ENCODE measurements at regions of chr7 and their contacts with region 1.

Region 1: DNA sequence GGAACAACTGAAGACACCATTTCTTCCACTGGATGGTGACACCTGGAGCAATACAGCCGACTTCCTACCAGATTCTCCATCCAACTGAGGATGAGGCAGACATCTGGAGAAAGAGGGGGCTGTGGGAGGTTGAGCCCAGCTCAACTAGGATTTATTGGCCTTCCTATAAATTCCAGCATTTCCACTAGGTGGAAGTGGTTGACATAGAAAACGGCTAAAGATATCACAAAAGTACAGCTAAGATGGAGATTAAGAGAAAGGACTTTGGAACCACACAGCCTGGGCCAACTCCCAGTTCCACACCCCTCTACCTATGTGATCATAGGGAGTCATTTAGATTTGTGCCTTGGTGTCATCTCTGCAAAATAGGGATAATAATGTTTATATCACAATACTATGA is 61.3 kb upstream of the CAV2 start:
- DNase-seq: peak; percentile 42 to 47
- H3K4me3 ChIP-seq: no peak overlapping the region
- H3K4me3 Mint-ChIP-seq: no peak overlapping the region
- H3K27ac Mint-ChIP-seq: no peak overlapping the region
- H3K4me1 ChIP-seq: peaks cover 24% of the 10 kb centered on the region
- H3K4me1 Mint-ChIP-seq: peaks cover 4% of the 10 kb centered on the region
- H3K27me3 ChIP-seq: no peaks in the 10 kb centered on the region
- H3K27me3 Mint-ChIP-seq: no peaks in the 10 kb centered on the region
- CTCF ChIP-seq: peak; percentile 19 to 41

Region 2: DNA sequence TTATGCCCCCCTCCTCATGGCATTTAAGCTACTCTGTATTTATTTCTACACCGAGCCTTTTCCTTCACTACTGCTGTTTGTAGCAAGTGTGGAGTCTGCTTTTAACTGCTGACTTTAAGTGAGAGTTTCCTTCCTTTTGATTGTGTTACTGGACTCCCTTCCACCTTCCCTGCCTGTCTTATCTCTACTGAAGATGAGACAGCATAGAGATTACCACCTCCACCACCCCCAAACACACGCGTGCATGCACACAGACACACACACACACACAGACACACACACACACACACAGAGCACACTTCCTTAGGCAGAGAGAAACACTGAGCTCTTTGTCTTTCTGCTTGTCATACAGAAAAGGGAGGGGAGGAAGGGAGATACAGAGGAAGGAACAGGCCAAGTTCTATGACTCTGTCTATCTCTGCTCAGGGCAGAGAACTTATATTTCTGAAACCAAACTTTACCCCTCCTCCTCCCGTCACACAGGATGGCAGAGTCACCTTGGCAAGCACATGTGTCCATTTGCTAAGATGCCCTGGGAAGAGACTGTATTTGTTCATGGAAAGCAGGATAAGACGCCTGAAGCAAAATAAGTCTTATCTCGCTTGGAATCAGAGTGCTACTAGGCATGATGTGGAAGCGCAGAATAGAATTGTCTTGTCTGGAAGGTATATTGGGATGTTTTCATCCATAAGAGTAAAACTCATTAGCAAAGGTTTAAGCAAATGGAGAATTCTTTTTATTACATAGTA is 20.5 kb before region 1 on chr7:
- CTCF ChIA-PET with region 1: no interaction called
- POLR2A ChIA-PET with region 1: no interaction called
- intact Hi-C with region 1: no loop called
- DNase-seq: no peak
- H3K4me3 ChIP-seq: no peak overlapping the region
- H3K4me3 Mint-ChIP-seq: no peak overlapping the region
- H3K27ac Mint-ChIP-seq: no peak overlapping the region
- H3K4me1 ChIP-seq: no peaks in the 10 kb centered on the region; the same call in 1 of the 2 replicates
- H3K4me1 Mint-ChIP-seq: peaks cover 8% of the 10 kb centered on the region
- H3K27me3 ChIP-seq: no peaks in the 10 kb centered on the region
- H3K27me3 Mint-ChIP-seq: no peaks in the 10 kb centered on the region
- CTCF ChIP-seq: no peak

Region 3: DNA sequence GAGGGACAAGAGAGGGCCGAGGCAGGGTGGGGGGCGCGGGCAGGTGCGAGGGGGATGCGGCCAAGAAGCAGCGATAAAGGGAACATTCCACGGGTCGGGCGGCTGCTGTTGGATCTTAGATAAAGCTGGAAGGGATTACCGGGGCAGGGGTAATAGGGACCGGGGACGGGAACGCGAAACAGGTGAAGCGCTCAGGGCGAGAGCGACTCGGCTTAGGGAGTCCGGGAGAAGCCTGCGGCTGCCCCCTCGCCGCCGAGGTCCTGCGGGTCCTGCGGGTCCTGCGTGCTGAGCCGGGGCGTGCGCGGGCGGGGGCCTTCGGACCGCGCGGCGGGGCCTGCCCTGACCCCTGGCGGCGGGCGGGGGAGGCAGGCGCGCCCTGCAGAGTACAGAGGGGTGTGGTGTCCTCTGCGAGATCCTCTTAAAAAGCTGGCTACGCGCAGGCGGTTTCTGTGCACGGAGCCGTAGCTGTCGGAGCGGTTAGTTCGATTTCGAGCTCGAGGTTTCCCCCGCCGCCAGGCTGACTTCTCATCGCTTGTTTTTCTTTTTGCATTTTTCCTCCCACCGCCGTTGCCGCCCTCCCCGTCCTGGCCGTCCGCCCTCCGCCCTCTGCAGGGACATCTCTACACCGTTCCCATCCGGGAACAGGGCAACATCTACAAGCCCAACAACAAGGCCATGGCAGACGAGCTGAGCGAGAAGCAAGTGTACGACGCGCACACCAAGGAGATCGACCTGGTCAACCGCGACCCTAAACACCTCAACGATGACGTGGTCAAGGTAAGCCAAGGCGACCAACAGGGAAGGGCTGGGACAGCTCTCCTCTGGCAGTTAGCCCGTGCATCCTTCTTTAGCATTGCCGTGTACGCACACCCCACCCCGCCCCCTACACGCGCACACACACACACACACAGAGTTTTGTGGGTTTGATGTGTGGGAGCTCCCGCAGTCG is 87.9 kb after region 1 on chr7:
- CTCF ChIA-PET with region 1: interaction called, 26 read pairs
- POLR2A ChIA-PET with region 1: no interaction called
- intact Hi-C with region 1: loop called (anchors 1 kb)
- DNase-seq: peak; percentile 75 to 88
- H3K4me3 ChIP-seq: peak overlapping the region; percentile 60
- H3K4me3 Mint-ChIP-seq: peak overlapping the region; percentile 94
- H3K27ac Mint-ChIP-seq: peak overlapping the region; percentile 52
- H3K4me1 ChIP-seq: peaks cover 10% of the 10 kb centered on the region; the same call in 1 of the 2 replicates
- H3K4me1 Mint-ChIP-seq: no peaks in the 10 kb centered on the region
- H3K27me3 ChIP-seq: no peaks in the 10 kb centered on the region
- H3K27me3 Mint-ChIP-seq: no peaks in the 10 kb centered on the region
- CTCF ChIP-seq: peak; percentile 66 to 91

Region 4: DNA sequence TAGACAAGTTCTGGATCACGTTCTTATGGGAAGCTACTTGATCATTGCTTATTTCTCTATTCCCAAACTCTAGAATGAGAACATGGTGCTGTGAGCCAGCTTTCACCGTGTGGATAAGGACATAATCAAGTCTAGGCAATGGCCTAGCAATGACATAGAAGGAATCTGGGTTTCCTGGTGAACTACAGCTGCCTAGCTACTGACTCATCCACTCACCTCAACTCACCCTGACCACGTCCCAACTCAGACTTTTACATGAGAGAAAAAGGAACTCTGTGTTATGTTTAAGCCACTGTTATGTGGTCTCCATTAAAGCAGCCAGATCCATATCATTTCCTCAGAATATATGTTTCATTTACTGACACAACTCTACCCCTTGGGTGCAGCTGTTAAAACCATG is 214.9 kb after region 1 on chr7:
- CTCF ChIA-PET with region 1: no interaction called
- POLR2A ChIA-PET with region 1: no interaction called
- intact Hi-C with region 1: no loop called
- DNase-seq: peak; percentile 28 to 47
- H3K4me3 ChIP-seq: no peak overlapping the region
- H3K4me3 Mint-ChIP-seq: no peak overlapping the region
- H3K27ac Mint-ChIP-seq: no peak overlapping the region
- H3K4me1 ChIP-seq: peaks cover 44% of the 10 kb centered on the region
- H3K4me1 Mint-ChIP-seq: peaks cover 24% of the 10 kb centered on the region
- H3K27me3 ChIP-seq: no peaks in the 10 kb centered on the region
- H3K27me3 Mint-ChIP-seq: no peaks in the 10 kb centered on the region
- CTCF ChIP-seq: no peak

Measured in Caco-2 (cell line).